CD4-positive, alpha-beta T cell (primary cell): ENCODE measurements at regions of chr1 and their contacts with region 1.

Region 1: GRCh38 chr1:147534386-147534785 is 6.9 kb upstream of the BCL9 start:
- DNase-seq: no peak
- ATAC-seq: no peak
- H3K4me3 ChIP-seq: no peak overlapping the region
- H3K4me3 Mint-ChIP-seq: no peak overlapping the region
- H3K27ac ChIP-seq: no peak overlapping the region
- H3K27ac Mint-ChIP-seq: no peak overlapping the region
- H3K4me1 ChIP-seq: peaks cover 3% of the 10 kb centered on the region
- H3K4me1 Mint-ChIP-seq: peaks cover 5% of the 10 kb centered on the region
- H3K27me3 ChIP-seq: no peaks in the 10 kb centered on the region
- H3K27me3 Mint-ChIP-seq: no peaks in the 10 kb centered on the region
- CTCF ChIP-seq: no peak

Region 2: GRCh38 chr1:147515046-147515869 is 19.1 kb before region 1 on chr1:
- CTCF ChIA-PET with region 1: interaction called, 3 read pairs
- POLR2A ChIA-PET with region 1: no interaction called
- intact Hi-C with region 1: loop called in 1 of 2 experiments (anchors 2 kb)
- DNase-seq: peak in 4 of 14 experiments; percentile 34 to 55 (median 45)
- ATAC-seq: peak; percentile 70
- H3K4me3 ChIP-seq: no peak overlapping the region
- H3K4me3 Mint-ChIP-seq: no peak overlapping the region
- H3K27ac ChIP-seq: no peak overlapping the region
- H3K27ac Mint-ChIP-seq: no peak overlapping the region
- H3K4me1 ChIP-seq: no peaks in the 10 kb centered on the region
- H3K4me1 Mint-ChIP-seq: peaks cover 7% of the 10 kb centered on the region
- H3K27me3 ChIP-seq: no peaks in the 10 kb centered on the region
- H3K27me3 Mint-ChIP-seq: no peaks in the 10 kb centered on the region
- CTCF ChIP-seq: peak; percentile 67